Motor neuron (in vitro differentiated cells): ENCODE measurements at regions of chr6 and their contacts with region 1.

Region 1: GRCh38 chr6:29035951-29036350 is 9.0 kb downstream of the OR2W1 start:
- ATAC-seq: no peak
- H3K4me3 ChIP-seq: no peak overlapping the region
- H3K27ac ChIP-seq: no peak overlapping the region
- H3K4me1 ChIP-seq: no peaks in the 10 kb centered on the region

Region 2: DNA sequence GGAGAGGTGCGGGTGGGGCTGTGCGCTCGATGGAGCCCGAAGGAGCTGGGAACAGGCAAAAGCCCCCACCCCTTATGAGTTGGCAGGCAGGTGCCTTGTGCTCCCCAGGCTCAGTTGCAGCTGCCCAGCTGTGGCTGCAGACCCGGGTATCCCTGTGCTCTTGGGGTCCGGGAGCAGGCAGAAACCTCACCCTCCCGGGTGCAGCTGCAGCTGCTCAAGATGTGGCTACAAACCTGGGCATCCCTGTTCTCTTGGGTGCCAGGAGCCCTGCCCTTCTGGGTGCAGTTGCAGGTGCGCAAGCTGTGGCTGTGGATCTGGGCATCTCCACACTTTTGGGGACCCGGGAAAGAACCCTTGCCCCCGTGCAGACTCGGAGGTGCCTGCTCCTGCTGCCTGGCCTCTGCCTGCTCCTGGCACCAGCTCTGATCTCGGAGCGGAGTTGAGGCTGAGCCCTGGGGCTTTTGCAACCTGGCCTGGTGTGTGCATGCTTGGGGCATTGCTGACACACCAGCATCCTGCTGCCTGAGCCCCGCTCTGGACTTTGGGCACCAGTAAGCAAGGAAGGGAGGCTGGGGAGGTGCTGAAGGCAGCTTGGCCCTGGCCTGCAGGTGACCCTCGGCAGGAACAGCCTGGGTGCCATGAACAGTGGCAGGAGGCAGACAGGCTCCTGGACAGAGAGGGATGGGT is 93.5 kb after region 1 on chr6:
- in situ Hi-C with region 1: loop called in 1 of 9 experiments (anchors 25 kb)
- ATAC-seq: no peak
- H3K4me3 ChIP-seq: no peak overlapping the region
- H3K27ac ChIP-seq: no peak overlapping the region
- H3K4me1 ChIP-seq: no peaks in the 10 kb centered on the region